CD14-positive monocyte (primary cell): ENCODE measurements at regions of chr10 and their contacts with region 1.

Region 1: GRCh38 chr10:23432166-23432565 is 6.7 kb upstream of the OTUD1 start:
- DNase-seq: peak; percentile 70 to 79 (median 72)
- H3K4me3 ChIP-seq: no peak overlapping the region
- H3K4me3 Mint-ChIP-seq: peak overlapping the region in 1 of 2 donors; percentile 60
- H3K27ac ChIP-seq: peak overlapping the region; percentile 76 to 98
- H3K27ac Mint-ChIP-seq: peak overlapping the region; percentile 96 to 99 (median 99)
- H3K4me1 ChIP-seq: peaks cover 45 to 52% of the 10 kb centered on the region in 2 donors
- H3K4me1 Mint-ChIP-seq: peaks cover 41% of the 10 kb centered on the region
- H3K27me3 ChIP-seq: no peaks in the 10 kb centered on the region
- H3K27me3 Mint-ChIP-seq: peaks cover 3 to 5% (median 3%) of the 10 kb centered on the region in 3 donors
- CTCF ChIP-seq: no peak

Region 2: DNA sequence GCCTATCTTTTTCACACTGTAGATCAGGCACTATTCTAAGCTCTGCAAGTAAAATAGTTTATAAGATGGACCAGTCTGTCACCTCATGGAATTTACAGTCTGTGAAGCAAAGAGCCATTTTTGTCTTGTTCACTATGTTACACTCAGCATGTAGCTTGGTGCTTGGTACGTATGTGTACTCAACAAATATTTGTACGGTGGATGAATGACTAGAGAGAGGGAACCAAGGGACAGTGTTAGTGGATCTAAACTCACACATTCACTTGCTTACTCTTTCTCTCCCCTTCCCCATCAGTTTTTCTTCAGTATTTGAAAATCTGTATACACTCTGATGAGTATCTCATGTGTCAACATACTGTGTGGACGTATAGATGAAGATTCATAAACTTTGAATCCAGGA is 194.2 kb before region 1 on chr10:
- intact Hi-C with region 1: no loop called
- DNase-seq: no peak
- H3K4me3 ChIP-seq: no peak overlapping the region
- H3K4me3 Mint-ChIP-seq: no peak overlapping the region
- H3K27ac ChIP-seq: no peak overlapping the region
- H3K27ac Mint-ChIP-seq: no peak overlapping the region
- H3K4me1 ChIP-seq: no peaks in the 10 kb centered on the region
- H3K4me1 Mint-ChIP-seq: no peaks in the 10 kb centered on the region
- H3K27me3 ChIP-seq: no peaks in the 10 kb centered on the region
- H3K27me3 Mint-ChIP-seq: peaks cover 0 to 3% (median 0%) of the 10 kb centered on the region in 3 donors
- CTCF ChIP-seq: no peak

Region 3: GRCh38 chr10:23413629-23414089 is 18.5 kb before region 1 on chr10:
- intact Hi-C with region 1: loop called in 1 of 2 experiments (anchors 1 kb)
- DNase-seq: peak; percentile 82 to 95 (median 91)
- H3K4me3 ChIP-seq: peak overlapping the region in 1 of 3 experiments; percentile 39
- H3K4me3 Mint-ChIP-seq: peak overlapping the region; percentile 75 to 78
- H3K27ac ChIP-seq: peak overlapping the region; percentile 77 to 87
- H3K27ac Mint-ChIP-seq: peak overlapping the region; percentile 89 to 99 (median 96)
- H3K4me1 ChIP-seq: peaks cover 32 to 33% of the 10 kb centered on the region in 2 donors
- H3K4me1 Mint-ChIP-seq: peaks cover 34% of the 10 kb centered on the region
- H3K27me3 ChIP-seq: no peaks in the 10 kb centered on the region
- H3K27me3 Mint-ChIP-seq: peaks cover 0 to 6% (median 1%) of the 10 kb centered on the region in 3 donors
- CTCF ChIP-seq: no peak

Region 4: DNA sequence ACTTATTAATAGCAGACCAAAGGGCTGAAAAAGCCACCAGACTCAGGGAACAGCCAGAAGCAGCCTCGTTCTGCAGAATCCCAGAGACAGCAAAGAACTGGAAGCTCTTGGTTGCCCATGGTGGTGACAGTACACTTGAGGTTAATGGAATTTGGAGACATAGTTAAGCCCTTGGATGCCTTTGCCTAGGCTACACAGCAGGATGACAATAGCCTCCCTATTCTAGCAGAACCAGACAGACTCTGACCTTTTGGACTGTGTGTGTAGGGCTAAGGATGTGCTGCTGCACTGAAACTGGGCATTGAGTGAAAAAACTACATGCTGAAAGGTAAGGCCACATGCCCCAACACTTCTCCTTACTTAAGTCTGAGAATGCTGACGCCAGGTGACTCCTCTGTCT is 29.4 kb after region 1 on chr10:
- intact Hi-C with region 1: no loop called
- DNase-seq: no peak
- H3K4me3 ChIP-seq: no peak overlapping the region
- H3K4me3 Mint-ChIP-seq: no peak overlapping the region
- H3K27ac ChIP-seq: no peak overlapping the region
- H3K27ac Mint-ChIP-seq: no peak overlapping the region
- H3K4me1 ChIP-seq: no peaks in the 10 kb centered on the region
- H3K4me1 Mint-ChIP-seq: no peaks in the 10 kb centered on the region
- H3K27me3 ChIP-seq: peaks cover 0 to 5% of the 10 kb centered on the region in 2 donors
- H3K27me3 Mint-ChIP-seq: peaks cover 5 to 24% (median 11%) of the 10 kb centered on the region in 3 donors
- CTCF ChIP-seq: no peak

Region 5: DNA sequence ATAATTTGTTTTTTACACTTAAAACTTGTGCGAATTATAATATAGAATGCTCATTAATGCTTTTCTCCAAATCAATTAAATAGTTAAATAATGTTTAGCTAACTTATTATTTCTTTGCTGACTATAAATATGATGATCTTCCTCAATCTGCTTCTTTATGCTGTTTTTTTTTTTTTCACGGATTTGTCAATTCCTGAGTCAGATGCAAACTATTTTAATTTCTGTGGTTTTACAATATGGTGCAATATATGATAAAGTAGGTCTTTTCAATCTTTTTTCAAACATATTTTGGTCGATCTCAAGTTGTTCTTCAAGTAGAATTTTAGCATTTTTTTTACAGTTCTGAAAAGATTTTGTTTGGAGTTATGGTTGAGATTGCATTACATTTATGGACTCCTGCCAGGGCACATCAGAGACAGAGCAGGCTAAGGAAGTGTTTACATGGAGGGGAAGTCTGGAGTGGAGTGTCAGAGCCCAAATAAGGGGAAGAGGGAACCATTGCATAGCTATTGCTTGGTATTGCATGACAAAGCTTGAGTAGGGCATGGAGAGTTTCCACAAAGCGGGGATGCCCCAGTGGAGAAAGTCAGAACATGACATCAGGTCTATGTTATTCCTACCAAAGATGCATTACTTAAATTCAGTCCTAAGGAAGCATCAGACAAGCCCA is 211.1 kb after region 1 on chr10:
- intact Hi-C with region 1: no loop called
- DNase-seq: peak; percentile 95 to 99 (median 97)
- H3K4me3 ChIP-seq: peak overlapping the region in 1 of 3 experiments; percentile 22
- H3K4me3 Mint-ChIP-seq: peak overlapping the region; percentile 39 to 78
- H3K27ac ChIP-seq: peak overlapping the region; percentile 76 to 97
- H3K27ac Mint-ChIP-seq: peak overlapping the region; percentile 97 to 100 (median 99)
- H3K4me1 ChIP-seq: peaks cover 14 to 28% of the 10 kb centered on the region in 2 donors
- H3K4me1 Mint-ChIP-seq: peaks cover 18% of the 10 kb centered on the region
- H3K27me3 ChIP-seq: peaks cover 0 to 7% of the 10 kb centered on the region in 2 donors
- H3K27me3 Mint-ChIP-seq: peaks cover 3 to 6% (median 4%) of the 10 kb centered on the region in 3 donors
- CTCF ChIP-seq: no peak